Left ventricle myocardium inferior (tissue), 1 donor: ENCODE measurements at regions of chr15 and their contacts with region 1.

Region 1: GRCh38 chr15:35669432-35670045 is 123.6 kb upstream of the DPH6 start:
- DNase-seq: no peak
- H3K4me3 ChIP-seq: no peak overlapping the region
- H3K27ac ChIP-seq: peak overlapping the region; percentile 86
- H3K4me1 ChIP-seq: peaks cover 83% of the 10 kb centered on the region
- H3K27me3 ChIP-seq: no peaks in the 10 kb centered on the region
- CTCF ChIP-seq: no peak

Region 2: DNA sequence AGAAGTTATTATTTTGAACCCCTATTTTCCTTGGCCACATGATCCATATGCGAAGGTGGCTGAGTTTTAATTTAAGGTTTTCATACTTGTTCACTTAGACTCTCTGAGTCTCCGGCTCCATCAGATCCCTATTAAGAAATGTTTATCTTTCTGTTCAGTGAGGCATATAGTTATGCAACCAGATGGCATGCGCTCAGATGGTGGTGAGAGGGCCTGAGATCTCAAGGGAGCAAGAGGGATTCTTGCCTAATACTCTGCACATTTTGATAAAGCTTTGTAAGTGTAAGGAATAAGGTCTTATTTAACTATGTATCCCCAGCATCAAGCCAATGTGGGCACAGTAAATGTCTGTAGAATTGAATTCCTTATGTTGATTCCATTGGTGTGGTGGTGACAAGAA is 44.7 kb before region 1 on chr15:
- intact Hi-C with region 1: no loop called
- DNase-seq: no peak
- H3K4me3 ChIP-seq: no peak overlapping the region
- H3K27ac ChIP-seq: no peak overlapping the region
- H3K4me1 ChIP-seq: peaks cover 36% of the 10 kb centered on the region
- H3K27me3 ChIP-seq: no peaks in the 10 kb centered on the region
- CTCF ChIP-seq: no peak

Region 3: DNA sequence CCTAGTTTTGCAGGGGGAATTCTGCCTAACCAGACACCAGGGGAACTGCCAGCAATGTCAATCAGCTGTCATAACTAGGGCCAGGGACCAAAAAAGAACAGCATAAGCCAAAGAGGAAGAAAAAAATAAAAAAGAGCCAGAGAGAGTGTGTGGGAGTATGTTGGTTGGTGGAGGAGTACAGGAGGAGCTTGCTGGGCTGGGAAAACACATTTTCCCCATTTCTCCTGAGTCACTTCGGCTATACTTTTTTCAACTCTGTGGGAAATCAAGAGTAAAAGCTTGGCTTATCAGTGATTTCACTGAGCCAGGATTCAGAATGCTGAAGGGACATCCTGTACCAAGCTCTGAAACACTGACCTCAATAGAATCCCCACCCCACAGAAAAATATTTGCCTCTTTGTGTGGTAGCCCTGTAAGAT is 21.2 kb after region 1 on chr15:
- intact Hi-C with region 1: loop called (anchors 2 kb)
- DNase-seq: no peak
- H3K4me3 ChIP-seq: peak overlapping the region; percentile 16
- H3K27ac ChIP-seq: peak overlapping the region; percentile 93
- H3K4me1 ChIP-seq: peaks cover 62% of the 10 kb centered on the region
- H3K27me3 ChIP-seq: no peaks in the 10 kb centered on the region
- CTCF ChIP-seq: no peak